Ovary (tissue), 10 donors: ENCODE measurements at regions of chr7 and their contacts with region 1.

Region 1: DNA sequence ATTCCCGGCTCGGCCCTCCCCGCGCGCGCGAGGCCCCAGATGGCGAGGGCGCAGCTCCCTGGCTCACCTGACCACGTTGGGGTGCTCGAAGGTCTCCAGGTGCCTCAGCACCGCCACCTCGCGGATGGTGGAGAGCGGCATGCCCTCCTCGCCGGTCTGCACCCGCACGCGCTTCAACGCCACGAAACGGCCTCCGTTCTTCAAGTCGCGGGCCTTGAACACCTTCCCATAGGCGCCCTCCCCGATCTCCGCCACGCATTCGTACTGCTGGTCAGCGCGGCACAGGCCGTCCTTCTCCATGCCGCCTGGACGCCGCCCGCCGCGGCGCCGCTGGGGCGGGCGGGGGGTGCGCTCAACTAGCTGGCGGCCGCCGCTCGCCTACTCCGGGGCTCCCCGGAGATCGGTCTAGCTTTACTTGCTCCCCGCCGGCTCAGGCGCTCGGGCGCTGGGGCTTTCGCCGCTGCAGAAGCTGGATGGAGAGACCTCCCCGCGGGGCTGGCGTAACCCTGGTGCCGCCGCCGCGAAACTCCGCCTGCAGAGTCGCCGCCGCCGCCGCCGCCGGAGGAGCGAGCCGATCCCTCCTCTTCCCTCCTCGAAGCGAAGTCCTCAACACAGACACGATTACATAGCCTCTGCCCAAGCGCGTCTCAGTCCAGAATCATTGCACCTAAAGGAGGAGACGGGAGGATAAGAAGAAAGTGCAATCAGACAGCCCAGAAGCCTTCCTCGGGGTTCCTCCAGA is 3.2 kb downstream of the CDK6 start:
- DNase-seq: peak; percentile 75 to 89 (median 82)
- H3K4me3 ChIP-seq: peak overlapping the region; percentile 55
- H3K27ac ChIP-seq: peak overlapping the region; percentile 13 to 73
- H3K4me1 ChIP-seq: peaks cover 7% of the 10 kb centered on the region
- H3K27me3 ChIP-seq: no peaks in the 10 kb centered on the region
- CTCF ChIP-seq: peak; percentile 77 to 78 (median 78)
- EP300 ChIP-seq: no peak
- POLR2A ChIP-seq: no peak

Region 2: DNA sequence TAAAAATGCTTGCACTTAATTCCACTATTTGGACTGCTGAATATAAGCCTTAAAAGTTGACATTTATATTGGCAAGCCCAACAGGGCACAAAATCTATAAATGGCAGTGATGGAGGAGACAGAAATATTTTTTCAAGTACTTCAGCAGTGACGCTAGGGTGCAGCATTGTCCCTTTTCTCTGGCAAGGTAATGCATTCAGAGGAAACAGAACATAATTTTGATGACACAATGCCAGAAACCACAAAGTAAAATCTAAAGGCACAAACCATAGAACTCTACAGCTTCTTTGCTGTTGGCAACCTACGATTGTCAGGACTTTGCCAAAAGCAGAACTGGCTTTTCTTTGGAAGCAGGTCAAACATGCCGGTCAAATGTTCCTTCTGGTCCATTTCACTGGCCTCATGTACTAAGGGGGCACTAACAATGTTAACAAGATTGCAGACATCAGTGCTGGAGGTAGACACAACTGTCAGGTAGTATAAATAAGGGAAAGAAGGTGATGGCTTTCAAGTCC is 212.1 kb before region 1 on chr7:
- intact Hi-C with region 1: loop called in 2 of 4 experiments (anchors 10 kb)
- DNase-seq: peak; percentile 49 to 69 (median 53)
- H3K4me3 ChIP-seq: no peak overlapping the region
- H3K27ac ChIP-seq: no peak overlapping the region
- H3K4me1 ChIP-seq: no peaks in the 10 kb centered on the region
- H3K27me3 ChIP-seq: no peaks in the 10 kb centered on the region
- CTCF ChIP-seq: peak; percentile 15 to 71 (median 69)
- EP300 ChIP-seq: no peak
- POLR2A ChIP-seq: no peak

Region 3: GRCh38 chr7:92645114-92646061 is 187.8 kb before region 1 on chr7:
- intact Hi-C with region 1: no loop called
- DNase-seq: no peak
- H3K4me3 ChIP-seq: no peak overlapping the region
- H3K27ac ChIP-seq: no peak overlapping the region
- H3K4me1 ChIP-seq: peaks cover 4% of the 10 kb centered on the region
- H3K27me3 ChIP-seq: no peaks in the 10 kb centered on the region
- CTCF ChIP-seq: no peak
- EP300 ChIP-seq: no peak
- POLR2A ChIP-seq: no peak

Region 4: GRCh38 chr7:92691578-92691977 is 141.6 kb before region 1 on chr7:
- intact Hi-C with region 1: loop called in 2 of 4 experiments (anchors 10 kb)
- DNase-seq: no peak
- H3K4me3 ChIP-seq: no peak overlapping the region
- H3K27ac ChIP-seq: no peak overlapping the region
- H3K4me1 ChIP-seq: no peaks in the 10 kb centered on the region
- H3K27me3 ChIP-seq: no peaks in the 10 kb centered on the region
- CTCF ChIP-seq: peak in 1 of 3 donors; percentile 16
- EP300 ChIP-seq: no peak
- POLR2A ChIP-seq: no peak

Region 5: DNA sequence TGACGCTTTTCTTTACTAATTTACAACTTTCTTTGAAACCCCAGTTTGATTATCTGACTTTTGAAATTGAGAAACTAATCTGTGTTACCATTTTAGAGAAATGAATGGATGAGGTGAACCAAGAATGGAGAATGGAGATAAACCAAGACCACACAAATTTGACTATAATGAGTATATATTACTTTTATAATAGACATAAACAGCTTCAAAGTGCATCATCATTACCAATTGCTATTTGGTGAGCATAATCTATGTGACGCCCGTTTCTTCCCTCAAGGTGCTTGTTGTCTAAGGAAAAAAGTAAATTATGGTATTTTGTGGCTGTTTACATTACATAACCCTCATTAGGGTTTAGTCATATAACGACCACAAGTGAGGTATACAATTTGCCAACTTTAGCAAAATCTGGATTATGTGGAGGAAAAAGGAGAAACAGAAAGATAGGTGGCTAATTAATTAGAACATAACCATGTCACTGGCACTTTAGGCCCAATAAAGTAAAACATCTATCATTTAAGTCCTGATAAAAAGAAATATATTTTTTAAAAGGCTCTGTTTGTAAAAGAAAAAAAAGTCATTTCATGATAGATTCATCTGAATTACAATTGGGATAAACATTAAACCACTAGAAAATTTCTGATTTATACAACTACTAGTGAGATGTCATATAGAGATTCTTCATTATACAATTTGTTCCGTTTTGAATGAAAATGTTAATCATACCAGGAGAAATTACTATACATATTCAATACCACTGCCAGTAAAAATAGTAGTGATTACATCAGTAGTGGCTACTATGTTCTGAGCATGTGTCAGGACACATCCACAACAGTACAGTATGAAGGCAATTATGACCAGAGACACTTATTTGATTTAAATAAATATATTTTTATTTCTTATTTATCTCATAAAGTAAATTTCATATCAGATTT is 124.8 kb before region 1 on chr7:
- intact Hi-C with region 1: no loop called
- DNase-seq: no peak
- H3K4me3 ChIP-seq: no peak overlapping the region
- H3K27ac ChIP-seq: no peak overlapping the region
- H3K4me1 ChIP-seq: no peaks in the 10 kb centered on the region
- H3K27me3 ChIP-seq: no peaks in the 10 kb centered on the region
- CTCF ChIP-seq: no peak
- EP300 ChIP-seq: no peak
- POLR2A ChIP-seq: no peak